ENCODE measurements at regions of chr5 and their contacts with region 1.

Region 1: GRCh38 chr5:75511435-75512384 is at the starts of genes CERT1 and POLK:
- DNase-seq: peak; percentile 97
- ATAC-seq: peak; percentile 95
- H3K4me3 Mint-ChIP-seq: peak within 1 kb of the TSS; percentile 99
- H3K27ac Mint-ChIP-seq: peak within 1 kb of the TSS; percentile 96
- H3K4me1 Mint-ChIP-seq: peaks cover 45% of the 10 kb centered on the region
- H3K27me3 Mint-ChIP-seq: no peaks in the 10 kb centered on the region
- CTCF ChIP-seq: no peak
- total RNA-seq, gene CERT1: 23.9 to 24.6 TPM
- total RNA-seq, gene POLK: 29.5 to 30.6 TPM

Region 2: GRCh38 chr5:75336625-75337339 is 174.9 kb before region 1 on chr5 and contains the start of gene HMGCR:
- CTCF ChIA-PET with region 1: no interaction called
- POLR2A ChIA-PET with region 1: interaction called, 3 read pairs
- intact Hi-C with region 1: loop called (anchors 5 kb)
- DNase-seq: peak; percentile 99
- ATAC-seq: peak; percentile 96
- H3K4me3 Mint-ChIP-seq: no peak within 1 kb of the TSS
- H3K27ac Mint-ChIP-seq: no peak within 1 kb of the TSS
- H3K4me1 Mint-ChIP-seq: peaks cover 32% of the 10 kb centered on the region
- H3K27me3 Mint-ChIP-seq: no peaks in the 10 kb centered on the region
- CTCF ChIP-seq: peak; percentile 6
- total RNA-seq, gene HMGCR: 50.3 to 50.8 TPM

Region 3: GRCh38 chr5:75566710-75567309 is 55.1 kb after region 1 on chr5:
- CTCF ChIA-PET with region 1: interaction called, 3 read pairs
- POLR2A ChIA-PET with region 1: interaction called, 4 read pairs
- intact Hi-C with region 1: loop called (anchors 5 kb)
- DNase-seq: peak; percentile 68
- ATAC-seq: peak; percentile 85
- H3K4me3 Mint-ChIP-seq: peak overlapping the region; percentile 62
- H3K27ac Mint-ChIP-seq: peak overlapping the region; percentile 96
- H3K4me1 Mint-ChIP-seq: peaks cover 54% of the 10 kb centered on the region
- H3K27me3 Mint-ChIP-seq: no peaks in the 10 kb centered on the region
- CTCF ChIP-seq: no peak

Region 4: DNA sequence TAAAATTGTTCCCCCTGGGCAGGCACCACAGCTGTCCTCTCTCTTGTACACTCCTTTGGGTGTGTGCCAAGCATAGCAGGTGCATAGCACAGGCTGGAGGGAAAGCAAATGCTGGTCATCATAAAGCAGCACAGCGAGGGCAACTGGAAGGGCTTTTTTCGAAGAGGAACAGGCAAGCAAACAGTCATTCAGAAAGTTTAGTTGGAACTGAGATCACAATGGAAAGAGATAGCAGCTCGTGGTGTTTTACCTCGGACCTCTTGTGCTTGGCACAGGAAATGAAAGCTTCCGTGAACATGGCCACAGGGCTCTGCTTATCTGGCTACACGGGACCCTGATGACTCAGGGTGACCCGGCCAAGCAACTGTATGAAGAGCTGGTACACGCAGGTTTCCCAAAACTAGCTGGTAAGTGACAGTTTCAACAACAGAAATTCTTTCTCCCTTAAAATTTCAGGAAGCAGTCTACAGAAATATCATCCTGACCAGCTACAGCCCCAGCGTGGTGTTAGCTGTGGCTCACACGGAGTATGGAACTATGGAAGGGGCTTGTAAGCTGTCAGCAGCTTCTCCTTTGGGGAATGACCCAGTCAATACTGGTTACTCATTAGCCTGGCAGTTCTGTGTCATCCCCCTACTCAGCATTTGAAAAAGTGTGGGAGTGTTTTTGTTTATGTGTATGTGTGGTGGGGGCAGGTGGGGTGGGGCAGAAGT is 157.4 kb after region 1 on chr5:
- CTCF ChIA-PET with region 1: interaction called, 4 read pairs
- POLR2A ChIA-PET with region 1: no interaction called
- intact Hi-C with region 1: loop called (anchors 5 kb)
- DNase-seq: peak; percentile 86
- ATAC-seq: peak; percentile 98
- H3K4me3 Mint-ChIP-seq: peak overlapping the region; percentile 66
- H3K27ac Mint-ChIP-seq: peak overlapping the region; percentile 86
- H3K4me1 Mint-ChIP-seq: peaks cover 35% of the 10 kb centered on the region
- H3K27me3 Mint-ChIP-seq: no peaks in the 10 kb centered on the region
- CTCF ChIP-seq: no peak